HEK293 (cell line): ENCODE measurements at regions of chr19 and their contacts with region 1.

Region 1: GRCh38 chr19:45692187-45693105 is at the start of gene QPCTL:
- H3K4me3 ChIP-seq: peak within 1 kb of the TSS; percentile 82
- H3K27ac ChIP-seq: peak within 1 kb of the TSS; percentile 93
- H3K4me1 ChIP-seq: no peaks in the 10 kb centered on the region; the same call in 1 of the 2 replicates
- CTCF ChIP-seq: no peak

Region 2: DNA sequence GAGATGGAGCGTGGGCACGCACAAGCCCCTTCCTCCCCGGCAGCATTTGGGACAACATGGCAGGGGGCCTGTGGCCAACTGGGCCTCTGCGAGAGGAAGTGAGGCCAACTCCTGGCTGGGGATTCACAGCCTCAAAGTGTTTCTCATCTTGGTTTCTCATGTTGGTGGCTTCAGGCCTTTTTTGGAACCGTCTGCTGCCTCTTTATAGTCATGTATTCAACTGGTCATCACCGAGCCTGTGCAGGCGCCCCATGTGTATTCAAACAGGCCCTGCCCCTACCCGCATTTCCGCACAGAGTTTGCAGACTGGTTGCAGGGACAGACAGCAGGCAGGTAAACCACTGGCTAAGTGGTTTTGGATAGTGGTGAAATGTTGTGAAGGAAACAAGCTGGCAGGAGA is 708.4 kb before region 1 on chr19:
- CTCF ChIA-PET with region 1: no interaction called
- POLR2A ChIA-PET with region 1: no interaction called
- H3K4me3 ChIP-seq: no peak overlapping the region
- H3K27ac ChIP-seq: no peak overlapping the region
- H3K4me1 ChIP-seq: no peaks in the 10 kb centered on the region
- CTCF ChIP-seq: no peak

Region 3: GRCh38 chr19:45681391-45682015 is 10.9 kb before region 1 on chr19:
- CTCF ChIA-PET with region 1: interaction called, 121 read pairs
- POLR2A ChIA-PET with region 1: interaction called, 24 read pairs
- H3K4me3 ChIP-seq: peak overlapping the region; percentile 25
- H3K27ac ChIP-seq: no peak overlapping the region; the same call in 1 of the 2 replicates
- H3K4me1 ChIP-seq: peaks cover 11% of the 10 kb centered on the region
- CTCF ChIP-seq: peak; percentile 97

Region 4: GRCh38 chr19:45705115-45705514 is 12.7 kb after region 1 on chr19:
- CTCF ChIA-PET with region 1: interaction called, 65 read pairs
- POLR2A ChIA-PET with region 1: interaction called, 12 read pairs
- H3K4me3 ChIP-seq: no peak overlapping the region
- H3K27ac ChIP-seq: no peak overlapping the region
- H3K4me1 ChIP-seq: no peaks in the 10 kb centered on the region
- CTCF ChIP-seq: no peak

Region 5: DNA sequence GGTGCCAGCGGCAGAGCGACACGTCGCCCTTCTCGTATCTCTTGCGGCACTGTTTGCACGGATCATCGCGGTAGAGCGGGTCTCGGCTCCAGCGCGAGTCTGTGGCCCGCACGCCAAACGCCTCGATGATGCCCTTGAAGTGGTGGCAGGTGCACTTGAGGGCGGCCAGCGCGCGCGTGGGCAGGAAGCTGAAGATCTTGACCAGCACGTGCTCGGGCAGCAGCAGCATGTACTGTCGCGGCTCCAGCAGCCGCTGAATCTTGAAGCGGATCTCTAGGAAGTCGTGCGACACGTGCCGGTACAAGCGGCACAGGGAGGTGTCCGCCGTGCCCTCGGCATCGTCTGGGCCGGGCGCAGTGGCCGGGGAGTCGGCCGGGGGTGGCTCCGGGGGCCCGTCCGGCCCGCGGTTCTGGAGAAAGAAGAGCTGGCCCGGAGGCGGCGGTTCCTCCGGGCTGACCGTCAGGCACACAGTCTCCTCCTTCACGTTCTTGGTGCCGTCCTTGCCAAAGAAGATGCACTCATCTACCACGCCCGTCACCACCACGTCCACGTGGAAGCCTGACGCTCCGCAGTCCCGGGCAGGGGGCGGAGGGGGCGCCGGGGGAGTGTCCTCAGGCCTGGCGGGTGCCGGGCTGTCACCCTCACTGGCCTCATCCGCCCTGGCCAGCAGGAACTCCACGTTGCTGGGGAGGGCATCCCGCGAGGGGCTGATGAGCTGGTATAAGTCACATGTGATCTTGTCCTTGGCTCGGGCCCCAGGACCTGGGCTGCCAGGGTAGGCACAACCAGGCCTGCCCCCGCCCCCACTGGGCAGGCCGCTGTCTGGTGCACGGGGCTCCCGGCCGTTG is 19.6 kb after region 1 on chr19:
- CTCF ChIA-PET with region 1: interaction called, 65 read pairs
- POLR2A ChIA-PET with region 1: interaction called, 44 read pairs
- H3K4me3 ChIP-seq: no peak overlapping the region
- H3K27ac ChIP-seq: no peak overlapping the region
- H3K4me1 ChIP-seq: peaks cover 11% of the 10 kb centered on the region
- CTCF ChIP-seq: no peak

Region 6: GRCh38 chr19:45717166-45717982 is 24.9 kb after region 1 on chr19:
- CTCF ChIA-PET with region 1: interaction called, 64 read pairs
- POLR2A ChIA-PET with region 1: interaction called, 44 read pairs
- H3K4me3 ChIP-seq: peak overlapping the region; percentile 72
- H3K27ac ChIP-seq: peak overlapping the region; percentile 92
- H3K4me1 ChIP-seq: peaks cover 19% of the 10 kb centered on the region
- CTCF ChIP-seq: peak; percentile 81

Region 7: DNA sequence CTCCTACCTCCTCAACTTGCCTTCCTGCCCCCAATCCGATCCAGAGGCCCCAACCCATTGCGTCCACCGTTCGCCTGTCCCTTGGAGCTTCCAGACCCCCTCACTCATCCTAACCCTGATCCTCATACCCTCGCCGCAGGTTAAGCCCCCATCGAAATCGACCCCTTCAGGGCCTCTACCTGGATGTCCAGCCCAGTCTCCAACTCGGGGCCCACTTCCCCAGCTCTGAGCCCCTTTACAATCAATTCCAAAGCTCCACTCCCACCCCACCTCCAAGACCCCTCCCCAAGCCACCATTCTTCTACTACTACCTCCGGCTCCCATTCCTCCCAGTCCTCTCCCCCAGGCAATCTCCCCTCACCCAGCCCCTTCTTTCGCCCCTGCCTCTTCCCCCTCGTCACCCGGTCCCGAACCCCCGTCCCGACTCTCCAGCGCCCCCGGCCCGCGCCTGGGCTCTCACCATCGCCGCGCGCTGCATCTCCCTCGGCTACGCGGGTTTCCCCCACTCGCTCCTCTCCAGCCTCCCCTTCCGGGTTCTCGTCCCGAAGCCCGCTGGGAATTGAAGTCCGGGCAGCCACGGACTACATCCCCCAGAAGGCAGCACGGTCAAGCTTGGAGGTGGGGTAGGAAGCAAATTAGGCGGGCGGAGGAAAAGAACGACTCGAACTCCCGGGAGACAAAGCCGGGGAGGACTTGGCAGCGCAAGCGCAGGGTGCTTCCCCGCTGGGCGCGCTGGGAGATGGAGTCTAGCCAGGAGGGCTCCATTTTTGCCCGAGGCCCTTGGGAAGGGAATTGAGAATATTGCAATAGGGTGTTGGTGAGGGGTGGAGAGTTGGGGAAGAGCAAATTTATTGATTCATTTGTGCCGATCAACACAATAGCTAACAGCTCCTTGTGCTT is 38.2 kb after region 1 on chr19 and contains the start of gene FBXO46:
- CTCF ChIA-PET with region 1: interaction called, 7 read pairs
- POLR2A ChIA-PET with region 1: interaction called, 22 read pairs
- H3K4me3 ChIP-seq: peak within 1 kb of the TSS; percentile 66
- H3K27ac ChIP-seq: peak within 1 kb of the TSS; percentile 44; the same call in 1 of the 2 replicates
- H3K4me1 ChIP-seq: peaks cover 5% of the 10 kb centered on the region; the same call in 1 of the 2 replicates
- CTCF ChIP-seq: peak; percentile 94

Region 8: GRCh38 chr19:45753546-45753945 is 61.1 kb after region 1 on chr19:
- CTCF ChIA-PET with region 1: interaction called, 14 read pairs
- POLR2A ChIA-PET with region 1: interaction called, 6 read pairs
- H3K4me3 ChIP-seq: no peak overlapping the region
- H3K27ac ChIP-seq: no peak overlapping the region
- H3K4me1 ChIP-seq: 0 out of 2 replicates have a peak, but pooled peaks cover 2% of the 10 kb centered on the region
- CTCF ChIP-seq: 0 out of 2 replicates have a peak, but pooled peaks have one; percentile 7